Left cardiac atrium (tissue), 4 donors: ENCODE measurements at regions of chr5 and their contacts with region 1.

Region 1: DNA sequence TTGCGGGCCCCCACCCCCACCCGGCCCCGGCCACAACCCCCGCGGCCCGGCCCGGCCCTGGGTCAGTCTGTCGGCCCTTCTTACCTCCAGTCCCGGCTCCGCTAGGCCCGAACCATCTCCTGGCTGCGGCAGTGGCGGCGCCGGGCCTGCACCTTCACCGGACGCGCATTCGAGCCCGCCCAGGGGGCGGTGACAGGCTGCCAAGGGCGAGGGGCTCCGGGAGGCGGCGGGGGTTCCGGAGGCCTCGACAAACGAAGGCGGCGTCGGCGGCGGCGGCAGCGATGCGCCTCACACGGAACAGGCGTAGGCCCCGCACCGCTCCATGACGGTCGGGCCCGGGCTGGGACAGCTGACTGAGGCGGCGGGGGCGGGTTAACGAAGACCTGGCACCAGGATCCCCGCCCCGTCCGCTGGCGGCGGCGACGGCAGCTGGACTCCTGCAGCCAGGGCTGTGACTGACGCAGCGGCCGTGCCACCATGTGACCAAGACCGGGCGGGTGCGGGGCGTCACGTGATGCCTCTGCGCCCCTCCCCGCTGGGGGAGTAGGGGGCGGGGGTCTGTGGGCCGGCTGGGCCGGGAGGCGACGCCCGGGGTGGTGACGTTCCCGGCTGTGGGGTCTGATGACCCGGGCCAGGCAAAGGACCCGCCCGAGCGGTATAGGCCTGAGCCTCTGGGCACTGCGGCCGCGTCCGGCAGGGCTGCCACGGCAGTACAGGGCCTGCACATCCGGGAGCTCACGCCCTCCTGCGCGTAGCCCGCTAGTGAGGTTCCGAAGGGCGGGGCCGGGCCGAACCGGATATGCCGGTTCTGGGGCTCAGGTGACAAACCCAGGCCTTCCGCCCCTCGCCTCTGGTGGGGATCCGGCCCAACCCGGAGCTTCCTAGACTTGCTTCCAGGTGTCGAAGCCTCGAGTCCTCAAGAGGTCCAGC is at the start of gene AFF4:
- DNase-seq: peak; percentile 98
- ATAC-seq: peak; percentile 97
- total RNA-seq, gene AFF4: 33.3 to 58.1 TPM

Region 2: GRCh38 chr5:132813599-132814502 is 149.6 kb before region 1 on chr5:
- intact Hi-C with region 1: no loop called
- DNase-seq: peak; percentile 34
- ATAC-seq: peak; percentile 78 to 87

Region 3: GRCh38 chr5:133025804-133026663 is 62.6 kb after region 1 on chr5 and contains the start of gene ZCCHC10:
- intact Hi-C with region 1: loop called in 1 of 2 experiments (anchors 10 kb)
- DNase-seq: peak; percentile 96
- ATAC-seq: peak; percentile 100
- total RNA-seq, gene ZCCHC10: 14.9 to 19.2 TPM